AG04449 (cell line): ENCODE measurements at regions of chr6 and their contacts with region 1.

Region 1: DNA sequence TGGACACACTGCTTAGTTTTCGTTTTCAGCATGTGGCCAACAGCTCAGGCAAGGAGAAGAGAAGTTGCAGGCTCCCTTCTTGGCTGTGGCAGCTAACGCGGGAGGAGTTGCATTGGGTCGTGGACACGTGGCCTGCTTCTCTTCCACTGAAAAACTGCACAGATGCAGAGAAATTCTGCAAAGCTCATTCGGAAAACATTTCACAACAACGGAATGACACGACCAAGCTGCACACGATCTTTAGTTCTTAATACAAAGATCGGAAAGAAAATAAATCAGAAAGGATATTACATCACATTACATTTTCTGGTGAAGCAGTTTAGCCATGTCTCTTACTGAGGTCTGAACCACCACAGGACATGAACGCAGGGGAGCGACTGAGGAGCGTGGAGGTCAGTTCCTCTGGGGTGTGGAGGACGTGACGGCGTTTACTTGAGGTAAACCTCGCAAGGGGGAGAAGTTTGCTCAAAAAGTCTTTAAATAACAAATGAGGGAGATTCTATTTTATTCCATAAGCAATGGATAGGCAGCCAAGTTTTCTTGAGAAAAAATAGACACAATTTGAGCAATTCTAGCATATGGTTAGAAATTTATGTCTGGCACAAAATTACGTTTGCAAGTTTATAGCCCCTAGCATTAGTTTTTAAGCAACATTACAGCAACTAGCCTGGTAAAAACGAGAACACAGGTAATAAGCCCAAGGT is 178.3 kb downstream of the THBS2 start:
- DNase-seq: peak; percentile 67
- H3K4me3 ChIP-seq: no peak overlapping the region; the same call in 1 of the 2 replicates
- CTCF ChIP-seq: no peak

Region 2: GRCh38 chr6:168826726-168827585 is 248.4 kb before region 1 on chr6:
- CTCF ChIA-PET with region 1: no interaction called
- POLR2A ChIA-PET with region 1: no interaction called
- DNase-seq: no peak
- H3K4me3 ChIP-seq: no peak overlapping the region
- CTCF ChIP-seq: no peak

Region 3: GRCh38 chr6:168884646-168885086 is 190.7 kb before region 1 on chr6:
- CTCF ChIA-PET with region 1: no interaction called
- POLR2A ChIA-PET with region 1: no interaction called
- DNase-seq: no peak
- H3K4me3 ChIP-seq: no peak overlapping the region
- CTCF ChIP-seq: peak; percentile 78

Region 4: DNA sequence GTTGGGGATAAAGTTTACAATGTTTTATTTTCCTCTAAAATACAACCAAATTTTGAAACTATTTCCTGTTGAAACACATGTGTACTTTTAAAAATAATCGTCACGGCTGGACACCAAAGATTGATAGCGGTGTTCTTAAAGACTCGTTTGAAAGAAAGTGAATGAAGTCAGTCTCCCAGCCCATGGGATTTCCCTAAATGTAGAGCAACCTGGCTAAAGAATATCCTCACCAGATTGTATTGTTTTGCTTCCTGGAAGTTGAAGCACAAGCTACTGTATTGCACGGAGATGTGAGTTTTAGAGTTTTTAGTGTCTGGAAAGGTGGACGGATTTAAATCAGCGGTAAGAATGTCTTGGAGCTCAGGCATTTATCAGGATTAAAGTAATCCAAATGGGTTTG is 11.2 kb before region 1 on chr6:
- CTCF ChIA-PET with region 1: no interaction called
- POLR2A ChIA-PET with region 1: no interaction called
- DNase-seq: no peak
- H3K4me3 ChIP-seq: no peak overlapping the region
- CTCF ChIP-seq: no peak

Region 5: DNA sequence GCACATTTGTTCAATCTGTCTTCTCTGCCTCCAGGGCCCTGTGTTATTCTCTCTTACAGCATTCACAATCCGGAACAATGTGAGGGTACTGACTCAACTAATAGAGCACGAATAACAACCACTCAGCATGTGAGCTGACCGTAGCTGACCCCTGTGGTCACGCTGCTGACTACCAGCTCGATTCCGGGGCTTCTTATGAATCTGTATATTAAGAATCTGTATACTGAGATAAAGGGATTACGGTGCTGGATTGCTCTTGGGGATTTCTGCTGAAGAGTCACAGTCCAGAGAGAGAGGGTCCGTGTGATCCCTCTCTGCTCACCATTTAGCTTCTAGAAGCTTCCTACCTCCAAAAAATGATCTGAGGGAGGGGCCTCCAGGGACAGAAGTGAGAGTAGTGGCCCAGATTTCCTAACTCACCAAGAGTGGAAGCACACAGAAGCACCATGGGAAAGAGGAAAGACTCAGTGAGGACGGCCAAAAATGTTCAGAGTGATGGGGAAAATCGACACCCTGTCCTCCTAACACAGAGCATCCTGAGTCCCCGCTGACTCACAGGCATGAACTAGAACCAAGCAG is 22.1 kb after region 1 on chr6:
- CTCF ChIA-PET with region 1: interaction called, 4 read pairs
- POLR2A ChIA-PET with region 1: interaction called, 26 read pairs
- DNase-seq: peak; percentile 96
- H3K4me3 ChIP-seq: no peak overlapping the region
- CTCF ChIP-seq: no peak